Psoas muscle (tissue), 8 donors: ENCODE measurements at regions of chr1 and their contacts with region 1.

Region 1: GRCh38 chr1:66360285-66360724 is 173.6 kb upstream of the SGIP1 start:
- DNase-seq: no peak
- ATAC-seq: no peak
- H3K4me3 ChIP-seq: no peak overlapping the region
- H3K27ac ChIP-seq: peak overlapping the region; percentile 25
- H3K4me1 ChIP-seq: peaks cover 59% of the 10 kb centered on the region
- H3K27me3 ChIP-seq: no peaks in the 10 kb centered on the region
- CTCF ChIP-seq: no peak

Region 2: GRCh38 chr1:65948609-65949229 is 411.6 kb before region 1 on chr1:
- intact Hi-C with region 1: loop called in 1 of 2 experiments (anchors 5 kb)
- DNase-seq: no peak
- ATAC-seq: peak; percentile 23 to 51 (median 50)
- H3K4me3 ChIP-seq: no peak overlapping the region
- H3K27ac ChIP-seq: no peak overlapping the region
- H3K4me1 ChIP-seq: no peaks in the 10 kb centered on the region
- H3K27me3 ChIP-seq: no peaks in the 10 kb centered on the region
- CTCF ChIP-seq: no peak